AG04450 (cell line): ENCODE measurements at regions of chr6 and their contacts with region 1.

Region 1: DNA sequence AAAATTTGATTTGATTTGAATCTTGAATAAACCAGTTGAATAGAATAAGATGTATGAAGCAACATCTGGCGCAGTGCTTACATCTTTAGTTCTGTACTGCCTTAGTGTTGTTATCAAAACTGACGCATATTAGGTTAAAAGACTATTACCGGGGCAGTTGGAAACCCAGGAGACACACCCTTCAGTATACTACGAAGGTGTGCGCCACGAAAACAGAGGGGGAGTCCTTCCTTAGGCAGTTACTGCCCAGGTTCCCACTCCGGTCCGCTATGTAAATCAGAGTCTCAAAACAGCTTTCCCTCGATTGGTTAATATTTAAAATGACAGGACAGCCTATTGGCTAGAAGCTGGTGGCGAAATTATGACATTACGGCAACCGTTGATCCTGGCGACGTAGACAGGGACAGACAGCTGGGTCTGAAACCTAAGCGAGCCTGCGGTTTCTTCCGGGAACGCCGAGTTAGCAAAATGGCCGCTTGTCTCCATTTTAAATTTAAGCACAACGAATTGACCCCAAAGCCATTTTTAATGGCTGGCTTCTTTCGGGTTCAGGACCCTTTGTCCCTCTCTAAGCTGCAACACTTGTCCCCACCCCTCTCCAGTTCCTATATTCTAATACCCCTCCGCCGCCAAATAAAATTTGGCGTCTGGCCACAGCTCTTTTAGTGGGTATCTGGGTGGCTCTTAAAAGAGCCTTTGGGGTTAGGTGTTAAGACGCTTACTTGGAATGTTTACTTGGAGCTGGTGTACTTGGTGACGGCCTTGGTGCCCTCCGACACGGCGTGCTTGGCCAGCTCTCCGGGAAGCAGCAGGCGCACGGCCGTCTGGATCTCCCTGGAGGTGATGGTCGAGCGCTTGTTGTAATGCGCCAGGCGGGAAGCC is 35.8 kb downstream of the HFE start:
- DNase-seq: peak; percentile 93
- H3K4me3 ChIP-seq: peak overlapping the region; percentile 78
- H3K27ac ChIP-seq: peak overlapping the region; percentile 93
- H3K27me3 ChIP-seq: no peaks in the 10 kb centered on the region
- CTCF ChIP-seq: 0 out of 2 replicates have a peak, but pooled peaks have one; percentile 2

Region 2: GRCh38 chr6:25717866-25718740 is 404.9 kb before region 1 on chr6:
- CTCF ChIA-PET with region 1: no interaction called
- POLR2A ChIA-PET with region 1: no interaction called
- DNase-seq: no peak
- H3K4me3 ChIP-seq: no peak overlapping the region
- H3K27ac ChIP-seq: no peak overlapping the region
- H3K27me3 ChIP-seq: no peaks in the 10 kb centered on the region
- CTCF ChIP-seq: peak; percentile 65

Region 3: GRCh38 chr6:26025894-26026832 is 96.9 kb before region 1 on chr6:
- CTCF ChIA-PET with region 1: interaction called, 6 read pairs
- POLR2A ChIA-PET with region 1: interaction called, 27 read pairs
- DNase-seq: peak; percentile 94
- H3K4me3 ChIP-seq: peak overlapping the region; percentile 78
- H3K27ac ChIP-seq: peak overlapping the region; percentile 91
- H3K27me3 ChIP-seq: no peaks in the 10 kb centered on the region
- CTCF ChIP-seq: peak; percentile 93

Region 4: GRCh38 chr6:26054857-26055669 is 68.0 kb before region 1 on chr6:
- CTCF ChIA-PET with region 1: no interaction called
- POLR2A ChIA-PET with region 1: interaction called, 24 read pairs
- DNase-seq: peak; percentile 89
- H3K4me3 ChIP-seq: peak overlapping the region; percentile 77
- H3K27ac ChIP-seq: peak overlapping the region; percentile 90
- H3K27me3 ChIP-seq: no peaks in the 10 kb centered on the region
- CTCF ChIP-seq: no peak

Region 5: DNA sequence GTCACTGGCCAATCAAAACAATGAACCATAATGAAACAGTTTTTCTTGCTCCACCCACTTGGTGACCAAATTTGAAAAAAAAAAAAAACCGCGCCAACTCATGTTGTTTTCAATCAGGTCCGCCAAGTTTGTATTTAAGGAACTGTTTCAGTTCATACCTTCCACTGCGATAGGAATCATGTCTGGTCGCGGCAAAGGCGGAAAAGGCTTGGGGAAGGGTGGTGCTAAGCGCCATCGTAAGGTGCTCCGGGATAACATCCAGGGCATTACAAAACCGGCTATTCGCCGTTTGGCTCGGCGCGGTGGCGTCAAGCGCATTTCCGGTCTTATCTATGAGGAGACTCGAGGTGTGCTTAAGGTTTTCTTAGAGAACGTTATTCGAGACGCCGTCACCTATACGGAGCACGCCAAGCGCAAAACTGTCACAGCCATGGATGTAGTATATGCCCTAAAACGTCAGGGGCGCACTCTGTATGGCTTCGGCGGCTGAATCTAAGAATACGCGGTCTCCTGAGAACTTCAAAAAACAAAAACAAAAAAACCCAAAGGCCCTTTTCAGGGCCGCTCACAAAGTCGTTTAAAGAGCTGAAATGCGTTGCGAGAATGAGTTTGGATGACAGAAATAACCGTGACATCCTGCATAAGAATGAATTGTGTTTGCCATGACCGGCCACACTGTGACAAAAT is 19.1 kb before region 1 on chr6:
- CTCF ChIA-PET with region 1: interaction called, 4 read pairs
- POLR2A ChIA-PET with region 1: interaction called, 101 read pairs
- DNase-seq: peak; percentile 88
- H3K4me3 ChIP-seq: peak overlapping the region; percentile 66
- H3K27ac ChIP-seq: peak overlapping the region; percentile 88
- H3K27me3 ChIP-seq: no peaks in the 10 kb centered on the region
- CTCF ChIP-seq: peak; percentile 62

Region 6: DNA sequence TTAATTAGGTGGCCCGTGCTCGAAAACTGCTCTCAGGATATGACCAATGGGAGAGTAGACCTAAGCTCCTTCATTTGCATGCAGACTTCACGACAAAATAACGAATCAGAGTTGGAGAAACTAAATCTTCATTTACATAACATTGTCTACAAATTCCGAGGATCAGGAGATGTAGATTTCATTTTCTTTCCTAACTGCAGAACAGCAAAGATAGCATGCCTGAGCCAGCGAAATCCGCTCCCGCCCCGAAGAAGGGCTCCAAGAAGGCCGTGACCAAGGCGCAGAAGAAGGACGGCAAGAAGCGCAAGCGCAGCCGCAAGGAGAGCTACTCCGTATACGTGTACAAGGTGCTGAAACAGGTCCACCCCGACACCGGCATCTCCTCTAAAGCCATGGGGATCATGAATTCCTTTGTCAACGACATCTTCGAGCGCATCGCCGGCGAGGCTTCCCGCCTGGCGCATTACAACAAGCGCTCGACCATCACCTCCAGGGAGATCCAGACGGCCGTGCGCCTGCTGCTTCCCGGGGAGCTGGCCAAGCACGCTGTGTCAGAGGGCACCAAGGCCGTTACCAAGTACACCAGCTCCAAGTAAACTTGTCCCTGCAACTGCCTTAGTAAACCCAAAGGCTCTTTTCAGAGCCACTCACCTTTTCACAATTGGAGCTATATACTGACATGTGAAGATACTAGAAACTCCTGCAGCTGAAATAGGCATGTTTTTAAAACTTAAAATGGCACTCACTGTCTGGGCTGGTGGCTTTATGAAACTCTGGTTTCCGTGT is 60.7 kb after region 1 on chr6:
- CTCF ChIA-PET with region 1: no interaction called
- POLR2A ChIA-PET with region 1: interaction called, 49 read pairs
- DNase-seq: peak; percentile 72
- H3K4me3 ChIP-seq: peak overlapping the region; percentile 61
- H3K27ac ChIP-seq: peak overlapping the region; percentile 71
- H3K27me3 ChIP-seq: no peaks in the 10 kb centered on the region
- CTCF ChIP-seq: no peak

Region 7: GRCh38 chr6:26249957-26250697 is 127.1 kb after region 1 on chr6:
- CTCF ChIA-PET with region 1: no interaction called
- POLR2A ChIA-PET with region 1: interaction called, 11 read pairs
- DNase-seq: no peak
- H3K4me3 ChIP-seq: peak overlapping the region; percentile 77
- H3K27ac ChIP-seq: peak overlapping the region; percentile 87
- H3K27me3 ChIP-seq: no peaks in the 10 kb centered on the region
- CTCF ChIP-seq: peak; percentile 50

Region 8: DNA sequence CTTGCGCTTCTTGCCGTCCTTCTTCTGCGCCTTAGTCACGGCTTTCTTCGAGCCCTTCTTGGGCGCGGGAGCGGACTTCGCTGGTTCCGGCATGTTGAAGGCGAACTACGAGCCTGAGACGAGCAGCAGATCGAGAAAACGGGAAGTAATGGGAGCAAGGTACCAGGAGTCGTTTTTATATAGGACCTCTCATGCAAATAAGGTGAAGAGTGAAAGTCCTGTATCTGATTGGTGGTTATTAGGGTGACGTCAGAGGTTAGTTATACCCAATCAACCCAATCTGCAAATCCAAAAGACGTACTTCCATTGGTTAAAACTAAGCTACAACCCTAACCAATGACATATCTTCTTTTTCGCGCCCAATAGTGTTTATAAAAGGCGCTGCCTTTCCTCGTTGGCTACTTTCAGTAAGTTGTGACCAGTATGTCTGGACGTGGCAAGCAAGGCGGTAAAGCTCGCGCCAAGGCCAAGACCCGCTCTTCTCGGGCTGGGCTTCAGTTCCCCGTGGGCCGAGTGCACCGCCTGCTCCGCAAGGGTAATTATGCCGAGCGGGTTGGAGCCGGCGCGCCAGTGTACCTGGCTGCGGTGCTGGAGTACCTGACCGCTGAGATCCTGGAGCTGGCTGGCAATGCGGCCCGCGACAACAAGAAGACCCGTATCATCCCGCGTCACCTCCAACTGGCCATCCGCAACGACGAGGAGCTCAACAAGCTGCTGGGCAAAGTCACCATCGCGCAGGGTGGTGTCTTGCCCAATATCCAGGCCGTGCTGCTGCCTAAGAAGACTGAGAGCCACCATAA is 1023.9 kb after region 1 on chr6:
- CTCF ChIA-PET with region 1: no interaction called
- POLR2A ChIA-PET with region 1: interaction called, 14 read pairs
- DNase-seq: peak; percentile 99
- H3K4me3 ChIP-seq: peak overlapping the region; percentile 73
- H3K27ac ChIP-seq: peak overlapping the region; percentile 98
- H3K27me3 ChIP-seq: no peaks in the 10 kb centered on the region
- CTCF ChIP-seq: no peak